Activated CD8-positive, alpha-beta T cell treated with anti-CD3 and anti-CD28 coated beads, Interleukin-2, amount 10 ng/mL, durations not matched to agents 7 days and 5 days (primary cell): ENCODE measurements at regions of chr1 and their contacts with region 1.

Region 1: GRCh38 chr1:206663832-206664652 is 20.7 kb upstream of the MAPKAPK2 start:
- DNase-seq: peak; percentile 84
- ATAC-seq: peak; percentile 92
- H3K4me3 Mint-ChIP-seq: no peak overlapping the region
- H3K27ac Mint-ChIP-seq: no peak overlapping the region
- H3K4me1 Mint-ChIP-seq: peaks cover 22% of the 10 kb centered on the region
- H3K27me3 Mint-ChIP-seq: peaks cover 37% of the 10 kb centered on the region

Region 2: DNA sequence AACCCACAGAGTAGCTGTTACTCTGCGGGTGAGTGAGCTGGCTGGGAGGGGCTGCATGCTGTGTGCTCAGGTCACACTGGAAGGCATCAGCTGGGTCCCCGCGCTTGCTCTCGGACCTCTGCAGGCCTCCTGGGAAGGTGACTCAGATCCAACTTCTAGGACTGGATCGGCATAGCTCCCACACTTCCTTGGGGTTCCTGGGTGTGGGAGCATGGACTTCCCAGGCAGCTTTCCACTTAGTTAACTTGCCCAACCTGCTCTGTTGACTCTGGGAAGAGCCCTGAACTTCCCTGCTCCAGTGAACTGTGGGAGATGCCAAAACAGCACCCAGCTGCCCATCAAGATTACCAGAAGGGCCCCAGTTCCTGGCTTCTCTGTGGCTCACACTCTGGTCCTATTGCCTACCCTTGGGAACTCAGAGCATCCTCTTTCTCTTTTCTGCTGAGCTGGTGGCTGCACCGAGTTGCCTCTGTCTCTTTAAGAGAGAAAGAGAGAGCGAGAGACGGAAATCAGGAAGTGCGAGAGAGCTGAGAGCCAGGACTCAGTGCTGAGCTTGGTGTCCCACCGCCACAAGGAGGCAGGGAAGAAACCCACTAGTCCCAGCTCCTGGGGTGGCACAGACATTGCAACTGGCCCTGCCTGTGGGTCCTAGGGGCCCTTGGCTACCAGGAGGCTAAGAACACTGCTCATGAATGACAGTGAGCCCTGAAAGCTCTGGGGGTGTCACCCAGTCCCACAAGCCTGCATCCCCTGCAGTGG is 193.9 kb before region 1 on chr1 and contains the start of gene IKBKE:
- CTCF ChIA-PET with region 1: interaction called, 12 read pairs
- POLR2A ChIA-PET with region 1: no interaction called
- DNase-seq: peak; percentile 73
- ATAC-seq: peak; percentile 71
- H3K4me3 Mint-ChIP-seq: peak within 1 kb of the TSS; percentile 89
- H3K27ac Mint-ChIP-seq: peak within 1 kb of the TSS; percentile 94
- H3K4me1 Mint-ChIP-seq: peaks cover 88% of the 10 kb centered on the region
- H3K27me3 Mint-ChIP-seq: no peaks in the 10 kb centered on the region
- total RNA-seq, gene IKBKE: 68.3 to 70.1 TPM

Region 3: DNA sequence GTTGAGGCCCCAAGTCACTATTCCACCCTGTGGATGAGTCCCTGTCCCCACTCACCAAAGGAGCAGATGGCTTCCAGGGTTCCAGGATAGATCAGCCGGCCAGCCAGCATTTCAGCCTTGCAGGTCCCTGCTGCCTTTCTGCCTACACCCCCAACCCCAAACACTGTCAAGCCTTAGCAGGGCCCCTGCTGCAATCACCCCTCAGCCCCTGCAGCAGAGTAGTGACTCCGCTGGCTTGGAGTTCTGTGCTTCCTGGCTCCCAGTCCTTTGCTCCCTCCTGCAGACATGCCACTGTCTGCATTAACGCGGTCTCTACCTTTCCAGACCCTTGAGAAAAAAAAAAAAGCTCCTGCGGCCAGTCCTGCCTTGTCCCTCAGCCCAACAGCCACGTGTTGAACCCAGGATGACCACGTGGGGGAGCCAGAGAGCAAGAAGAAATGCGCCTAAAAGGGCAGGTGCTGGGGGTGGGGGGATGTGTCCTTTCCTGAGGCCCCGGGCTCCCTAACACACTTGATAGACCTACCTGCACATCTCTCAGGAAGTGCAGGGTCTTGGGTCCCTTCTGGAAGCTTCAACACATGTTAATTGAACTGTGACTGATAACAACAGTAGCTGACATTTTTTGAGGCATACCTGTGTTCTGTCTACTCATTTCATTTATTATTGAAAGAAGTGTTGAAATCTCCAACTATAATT is 119.3 kb before region 1 on chr1:
- CTCF ChIA-PET with region 1: interaction called, 29 read pairs
- POLR2A ChIA-PET with region 1: no interaction called
- DNase-seq: peak; percentile 85
- ATAC-seq: peak; percentile 81
- H3K4me3 Mint-ChIP-seq: no peak overlapping the region
- H3K27ac Mint-ChIP-seq: peak overlapping the region; percentile 26
- H3K4me1 Mint-ChIP-seq: peaks cover 20% of the 10 kb centered on the region
- H3K27me3 Mint-ChIP-seq: no peaks in the 10 kb centered on the region

Region 4: DNA sequence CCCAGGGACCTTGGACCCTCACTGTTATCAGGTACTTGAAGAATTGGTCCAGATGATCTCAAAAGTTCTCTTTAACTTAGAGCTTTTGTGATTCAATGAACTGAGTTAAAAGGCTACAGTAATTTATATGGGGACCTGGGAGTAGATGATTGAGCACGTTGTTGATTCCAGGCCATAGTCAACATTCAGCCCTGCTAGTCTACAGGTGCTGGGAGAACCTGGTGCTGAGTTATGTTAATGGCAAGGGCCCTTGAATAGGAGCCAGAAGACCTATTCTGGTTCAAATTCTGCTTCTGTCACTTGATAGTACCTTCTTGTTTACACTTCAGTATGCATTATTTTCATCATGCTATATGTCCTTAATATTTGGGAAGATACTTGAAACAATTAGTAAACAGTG is 17.5 kb before region 1 on chr1:
- CTCF ChIA-PET with region 1: interaction called, 647 read pairs
- POLR2A ChIA-PET with region 1: interaction called, 3 read pairs
- DNase-seq: no peak
- ATAC-seq: no peak
- H3K4me3 Mint-ChIP-seq: no peak overlapping the region
- H3K27ac Mint-ChIP-seq: no peak overlapping the region
- H3K4me1 Mint-ChIP-seq: no peaks in the 10 kb centered on the region
- H3K27me3 Mint-ChIP-seq: no peaks in the 10 kb centered on the region

Region 5: GRCh38 chr1:206693029-206693428 is 29.0 kb after region 1 on chr1:
- CTCF ChIA-PET with region 1: interaction called, 22 read pairs
- POLR2A ChIA-PET with region 1: no interaction called
- DNase-seq: no peak
- ATAC-seq: no peak
- H3K4me3 Mint-ChIP-seq: no peak overlapping the region
- H3K27ac Mint-ChIP-seq: peak overlapping the region; percentile 5
- H3K4me1 Mint-ChIP-seq: peaks cover 42% of the 10 kb centered on the region
- H3K27me3 Mint-ChIP-seq: no peaks in the 10 kb centered on the region

Region 6: GRCh38 chr1:206725109-206725963 is 61.3 kb after region 1 on chr1:
- CTCF ChIA-PET with region 1: interaction called, 17 read pairs
- POLR2A ChIA-PET with region 1: no interaction called
- DNase-seq: peak; percentile 81
- ATAC-seq: peak; percentile 66
- H3K4me3 Mint-ChIP-seq: no peak overlapping the region
- H3K27ac Mint-ChIP-seq: no peak overlapping the region
- H3K4me1 Mint-ChIP-seq: peaks cover 60% of the 10 kb centered on the region
- H3K27me3 Mint-ChIP-seq: no peaks in the 10 kb centered on the region